Mucosa of descending colon (tissue), 3 donors: ENCODE measurements at regions of chr2 and their contacts with region 1.

Region 1: DNA sequence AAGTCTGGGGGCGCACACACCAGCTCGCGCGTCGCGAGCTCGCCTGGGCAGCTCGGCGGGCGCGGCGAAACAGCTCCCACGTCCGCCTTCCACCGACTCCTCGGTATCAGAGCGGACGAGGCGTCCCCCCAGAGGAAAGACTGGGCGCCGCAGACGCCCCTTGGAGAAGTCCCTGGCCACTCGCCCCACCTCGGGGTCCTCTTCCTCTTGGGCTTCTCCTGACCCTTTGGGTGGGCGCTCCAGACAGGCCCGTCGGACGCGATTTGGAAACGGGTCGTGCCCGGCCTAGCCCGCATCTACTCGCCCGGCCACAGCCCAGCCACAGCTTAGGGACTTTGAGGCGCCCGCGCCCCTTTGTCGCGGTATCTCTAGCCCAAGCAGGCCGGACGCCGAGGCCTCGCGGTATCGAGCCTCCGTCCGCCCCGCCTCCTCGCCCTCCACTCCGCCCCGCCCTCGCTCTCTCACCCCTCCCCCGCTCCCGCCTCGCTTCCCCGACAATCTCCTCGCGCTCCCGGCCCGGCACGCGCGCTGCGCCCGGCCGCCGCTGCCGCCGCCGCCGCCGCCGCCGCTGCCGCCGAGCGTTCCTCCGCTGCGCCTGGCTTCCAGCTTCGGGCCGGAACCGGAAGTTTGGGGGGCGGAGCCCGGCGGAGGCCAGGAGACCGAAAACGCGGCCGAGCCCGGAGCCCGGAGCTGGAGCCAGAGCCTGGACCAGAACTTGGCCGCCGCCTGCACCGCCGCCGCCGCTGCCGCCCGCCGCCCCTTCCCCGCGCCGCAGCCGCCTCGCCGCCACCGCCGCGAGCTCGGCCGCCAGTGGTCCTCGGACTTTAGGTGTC is 749 bp upstream of the ACVR2A start:
- DNase-seq: peak; percentile 94 to 96 (median 95)
- ATAC-seq: peak; percentile 95
- H3K4me3 ChIP-seq: peak overlapping the region; percentile 61
- H3K4me1 ChIP-seq: peaks cover 2% of the 10 kb centered on the region
- CTCF ChIP-seq: no peak

Region 2: GRCh38 chr2:147636238-147636882 is 207.7 kb before region 1 on chr2:
- intact Hi-C with region 1: loop called in 1 of 2 experiments (anchors 10 kb)
- DNase-seq: no peak
- ATAC-seq: peak; percentile 16
- H3K4me3 ChIP-seq: no peak overlapping the region
- H3K4me1 ChIP-seq: peaks cover 18% of the 10 kb centered on the region
- CTCF ChIP-seq: no peak

Region 3: GRCh38 chr2:148330087-148330486 is 486.0 kb after region 1 on chr2:
- intact Hi-C with region 1: no loop called
- DNase-seq: no peak
- ATAC-seq: no peak
- H3K4me3 ChIP-seq: no peak overlapping the region
- H3K4me1 ChIP-seq: no peaks in the 10 kb centered on the region
- CTCF ChIP-seq: no peak